Left colon (tissue), 2 donors: ENCODE measurements at regions of chr7 and their contacts with region 1.

Region 1: DNA sequence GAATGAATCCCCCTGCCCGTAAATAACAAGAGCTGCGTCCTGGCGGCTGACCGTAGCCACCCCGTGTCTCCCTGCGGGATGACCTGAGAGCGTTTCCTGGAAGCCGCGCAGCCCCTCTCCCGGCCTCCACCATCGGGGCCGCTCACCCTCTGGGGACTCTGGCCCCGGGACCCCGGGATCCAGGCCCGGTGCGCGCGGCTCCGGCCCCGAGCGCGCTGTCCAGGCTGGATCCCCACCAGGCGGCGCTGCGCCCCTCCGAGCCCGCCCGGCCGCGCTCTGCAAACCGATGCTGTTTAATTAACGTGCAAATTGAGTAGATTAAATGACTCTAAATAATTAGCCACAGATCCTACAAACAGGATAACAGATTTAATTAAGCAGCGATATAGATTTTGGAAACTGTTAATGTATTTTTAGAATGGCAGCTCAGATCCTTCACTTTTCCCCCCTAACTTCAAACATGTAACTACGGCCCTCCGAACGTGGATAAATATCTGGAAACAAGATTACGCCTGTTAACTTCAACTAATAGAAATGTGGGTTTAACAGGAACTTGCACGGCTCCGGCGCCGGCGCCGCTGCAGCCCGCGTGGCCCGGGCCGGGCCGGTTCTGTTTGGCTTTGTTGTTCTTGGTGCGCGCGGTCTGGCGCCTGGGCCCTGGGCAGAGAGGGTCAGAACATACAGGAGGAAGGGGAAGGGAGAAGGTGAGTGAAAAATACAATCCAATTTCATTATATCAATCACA is 7.1 kb upstream of the UNCX start:
- DNase-seq: peak in 1 of 2 donors; percentile 34
- ATAC-seq: peak; percentile 57

Region 2: DNA sequence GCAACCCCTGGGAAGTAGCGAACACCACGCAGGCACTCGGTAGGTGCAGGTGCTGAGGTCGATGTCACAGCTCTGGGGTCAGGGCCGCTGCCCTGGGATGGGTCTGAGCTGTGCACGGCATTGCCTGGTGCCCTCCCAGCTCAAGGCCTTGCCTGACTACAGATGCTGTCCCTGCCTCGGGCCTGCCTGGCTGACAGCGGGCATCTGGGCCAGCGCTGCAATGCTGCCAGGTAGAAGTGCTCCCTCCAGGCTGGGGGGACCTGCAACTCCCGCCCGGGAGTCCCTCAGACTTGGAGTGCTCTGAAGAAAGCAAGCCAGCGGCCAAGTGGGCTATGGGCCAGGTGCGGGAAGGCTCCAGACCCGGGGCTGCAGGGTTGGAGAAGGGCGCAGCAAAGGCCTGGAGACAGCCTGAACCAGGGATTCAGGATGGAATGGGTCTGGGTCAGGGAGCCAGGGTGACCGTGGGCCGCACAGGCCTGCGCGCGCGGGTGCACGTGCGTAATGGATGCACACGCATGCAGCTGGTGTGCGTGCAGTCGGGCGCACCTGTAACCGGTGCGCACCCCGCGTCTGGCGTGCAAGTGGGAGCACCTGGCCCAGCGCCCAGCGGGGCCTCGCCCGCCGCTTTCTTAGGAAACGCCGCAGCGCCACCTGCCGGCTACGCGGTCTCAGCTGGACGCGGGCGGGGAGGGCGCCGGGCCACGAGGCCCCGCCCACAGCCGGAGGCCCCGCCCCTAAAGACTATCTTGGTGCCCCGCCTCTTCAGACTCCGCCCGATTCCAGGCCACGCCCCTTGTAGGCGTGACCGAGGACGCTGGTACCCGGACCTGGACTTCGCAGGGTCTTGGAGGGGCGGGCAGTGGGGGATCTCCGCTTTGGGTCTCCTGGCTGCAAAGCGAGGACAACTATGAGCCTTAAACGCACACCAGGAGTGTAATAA is 187.0 kb after region 1 on chr7:
- intact Hi-C with region 1: loop called in 1 of 2 experiments (anchors 10 kb)
- DNase-seq: peak; percentile 72 to 94
- ATAC-seq: peak; percentile 99

Region 3: GRCh38 chr7:1425292-1426136 is 199.9 kb after region 1 on chr7:
- intact Hi-C with region 1: loop called in 1 of 2 experiments (anchors 10 kb)
- DNase-seq: no peak
- ATAC-seq: no peak

Region 4: GRCh38 chr7:1473864-1474512 is 248.4 kb after region 1 on chr7:
- intact Hi-C with region 1: loop called in 1 of 2 experiments (anchors 10 kb)
- DNase-seq: peak; percentile 88 to 93
- ATAC-seq: peak; percentile 94